ENCODE measurements at regions of chr2 and their contacts with region 1.

Region 1: DNA sequence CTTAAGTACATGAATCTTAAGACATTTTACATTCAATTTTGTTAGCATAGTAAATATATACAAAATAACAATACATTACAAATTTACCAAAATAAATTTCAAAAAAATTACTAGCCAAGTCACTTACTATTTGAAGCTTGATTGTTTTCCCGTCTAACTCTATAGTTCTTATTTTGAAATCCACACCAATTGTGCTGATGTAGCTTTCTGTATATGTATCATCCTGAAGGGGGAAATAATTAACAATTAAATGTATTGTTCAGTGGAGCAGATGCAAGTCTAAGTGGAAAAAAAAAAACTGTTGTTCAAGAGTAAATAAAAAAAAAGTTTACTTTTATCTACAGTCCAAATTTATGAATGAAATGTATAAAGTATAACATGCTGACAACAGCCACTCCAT is 32.1 kb downstream of the RAB1A start:
- DNase-seq: no peak
- H3K4me3 ChIP-seq: no peak overlapping the region
- H3K27ac ChIP-seq: no peak overlapping the region
- H3K4me1 ChIP-seq: no peaks in the 10 kb centered on the region
- H3K27me3 ChIP-seq: no peaks in the 10 kb centered on the region
- CTCF ChIP-seq: no peak

Region 2: GRCh38 chr2:65198737-65199136 is 100.9 kb after region 1 on chr2:
- CTCF ChIA-PET with region 1: no interaction called
- POLR2A ChIA-PET with region 1: no interaction called
- intact Hi-C with region 1: no loop called
- DNase-seq: no peak
- H3K4me3 ChIP-seq: no peak overlapping the region
- H3K27ac ChIP-seq: no peak overlapping the region
- H3K4me1 ChIP-seq: no peaks in the 10 kb centered on the region
- H3K27me3 ChIP-seq: no peaks in the 10 kb centered on the region
- CTCF ChIP-seq: no peak

Region 3: GRCh38 chr2:65402780-65403528 is 305.1 kb after region 1 on chr2:
- CTCF ChIA-PET with region 1: no interaction called
- POLR2A ChIA-PET with region 1: interaction called, 15 read pairs
- intact Hi-C with region 1: no loop called
- DNase-seq: no peak
- H3K4me3 ChIP-seq: no peak overlapping the region
- H3K27ac ChIP-seq: no peak overlapping the region
- H3K4me1 ChIP-seq: peaks cover 24% of the 10 kb centered on the region
- H3K27me3 ChIP-seq: no peaks in the 10 kb centered on the region
- CTCF ChIP-seq: no peak

Measured in PC-9 (cell line).